Right ventricle myocardium superior (tissue), 1 donor: ENCODE measurements at regions of chr15 and their contacts with region 1.

Region 1: GRCh38 chr15:30073915-30074314 is 8.8 kb upstream of the GOLGA8J start:
- DNase-seq: no peak
- ATAC-seq: no peak

Region 2: DNA sequence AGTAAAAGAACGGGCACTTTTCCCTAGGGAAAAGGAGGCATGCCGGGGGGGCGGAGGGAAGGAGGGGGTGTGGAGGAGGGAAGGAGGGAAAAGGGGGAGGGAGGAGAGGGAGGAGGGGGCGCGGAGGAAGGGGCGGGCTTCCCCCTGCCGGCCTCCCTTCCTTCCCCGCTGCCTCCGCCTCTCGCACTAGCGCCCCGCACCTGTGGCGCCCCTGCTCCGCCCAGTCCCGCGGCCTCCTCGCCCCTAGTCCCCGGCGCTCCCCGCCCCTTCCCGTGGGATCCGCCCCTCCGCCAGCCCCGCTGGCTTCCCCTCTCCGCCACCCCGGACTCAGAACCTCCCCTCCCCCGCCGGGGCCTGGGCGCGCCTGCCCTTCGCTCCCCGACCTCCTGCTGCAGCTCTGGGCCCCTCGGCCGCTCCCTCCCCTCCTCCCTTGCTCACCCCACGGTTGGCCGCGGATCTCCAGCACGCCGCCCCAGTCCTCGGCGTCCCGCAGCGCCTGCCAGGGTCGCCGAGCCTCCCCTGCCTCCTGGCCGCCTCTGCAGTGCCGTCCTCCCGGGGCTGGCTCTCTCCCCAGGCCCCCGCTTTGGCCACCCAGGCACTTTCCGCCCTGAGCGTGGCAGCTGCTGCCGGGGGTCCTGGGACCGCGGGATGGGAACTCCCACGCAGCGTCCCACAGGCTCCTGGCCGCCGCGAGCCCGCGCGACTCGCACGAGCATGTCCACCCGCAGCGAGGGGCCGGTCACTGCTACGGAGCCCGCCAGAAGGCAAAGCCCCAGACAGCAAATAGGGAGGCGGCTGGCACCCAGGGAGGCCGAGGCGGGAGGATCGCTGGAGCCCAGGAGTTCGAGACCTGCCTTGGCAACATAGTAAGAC is 399.0 kb before region 1 on chr15:
- intact Hi-C with region 1: loop called (anchors 10 kb)
- DNase-seq: peak; percentile 53
- ATAC-seq: peak; percentile 87

Region 3: GRCh38 chr15:29962407-29962806 is 111.5 kb before region 1 on chr15:
- intact Hi-C with region 1: no loop called
- DNase-seq: no peak
- ATAC-seq: no peak